ENCODE measurements at regions of chr14 and their contacts with region 1.

Region 1: GRCh38 chr14:75223664-75224154 is 47.3 kb upstream of the TMED10 start:
- DNase-seq: no peak
- ATAC-seq: peak; percentile 55
- H3K4me3 Mint-ChIP-seq: peak overlapping the region; percentile 50
- H3K27ac Mint-ChIP-seq: peak overlapping the region; percentile 36
- H3K4me1 Mint-ChIP-seq: peaks cover 43% of the 10 kb centered on the region
- H3K27me3 Mint-ChIP-seq: no peaks in the 10 kb centered on the region
- CTCF ChIP-seq: no peak

Region 2: DNA sequence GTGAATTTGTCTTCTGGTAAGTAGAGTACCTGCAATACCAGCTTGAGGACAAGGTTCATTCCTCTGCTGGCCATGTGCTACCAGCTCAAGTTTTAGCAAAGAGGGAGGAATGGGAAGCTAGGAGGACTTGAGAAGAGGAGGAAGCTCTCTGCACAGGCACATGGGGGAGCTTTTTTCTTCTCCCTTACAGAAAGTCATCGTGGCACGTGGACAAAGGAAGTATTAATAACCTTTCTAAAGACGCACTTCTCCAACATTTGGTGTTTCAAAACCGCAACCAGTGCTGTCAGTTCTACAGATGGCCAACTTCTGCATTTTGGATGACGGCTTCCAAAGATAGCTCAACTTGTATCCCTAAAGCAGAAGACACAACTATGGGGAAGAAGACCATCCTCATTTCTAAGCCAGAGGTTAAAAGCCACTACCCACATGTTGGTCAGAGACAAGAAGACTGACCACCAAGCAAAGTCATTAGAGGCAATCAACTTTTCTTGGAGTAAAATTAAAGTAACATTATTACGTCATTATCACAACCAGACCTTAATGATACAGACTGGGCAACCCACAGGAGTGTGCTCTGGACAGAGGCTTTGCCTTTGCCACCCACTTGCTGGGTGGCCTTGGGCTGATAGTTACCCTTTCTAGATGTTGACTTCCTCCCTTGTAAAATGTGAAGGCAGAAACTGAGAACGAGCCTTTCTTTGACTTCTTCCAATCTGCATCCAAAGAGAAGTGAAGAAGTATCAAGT is 35.0 kb before region 1 on chr14:
- CTCF ChIA-PET with region 1: no interaction called
- POLR2A ChIA-PET with region 1: interaction called, 11 read pairs
- intact Hi-C with region 1: no loop called
- DNase-seq: no peak
- ATAC-seq: peak; percentile 88
- H3K4me3 Mint-ChIP-seq: peak overlapping the region; percentile 47
- H3K27ac Mint-ChIP-seq: peak overlapping the region; percentile 68
- H3K4me1 Mint-ChIP-seq: peaks cover 25% of the 10 kb centered on the region
- H3K27me3 Mint-ChIP-seq: no peaks in the 10 kb centered on the region
- CTCF ChIP-seq: no peak

Region 3: DNA sequence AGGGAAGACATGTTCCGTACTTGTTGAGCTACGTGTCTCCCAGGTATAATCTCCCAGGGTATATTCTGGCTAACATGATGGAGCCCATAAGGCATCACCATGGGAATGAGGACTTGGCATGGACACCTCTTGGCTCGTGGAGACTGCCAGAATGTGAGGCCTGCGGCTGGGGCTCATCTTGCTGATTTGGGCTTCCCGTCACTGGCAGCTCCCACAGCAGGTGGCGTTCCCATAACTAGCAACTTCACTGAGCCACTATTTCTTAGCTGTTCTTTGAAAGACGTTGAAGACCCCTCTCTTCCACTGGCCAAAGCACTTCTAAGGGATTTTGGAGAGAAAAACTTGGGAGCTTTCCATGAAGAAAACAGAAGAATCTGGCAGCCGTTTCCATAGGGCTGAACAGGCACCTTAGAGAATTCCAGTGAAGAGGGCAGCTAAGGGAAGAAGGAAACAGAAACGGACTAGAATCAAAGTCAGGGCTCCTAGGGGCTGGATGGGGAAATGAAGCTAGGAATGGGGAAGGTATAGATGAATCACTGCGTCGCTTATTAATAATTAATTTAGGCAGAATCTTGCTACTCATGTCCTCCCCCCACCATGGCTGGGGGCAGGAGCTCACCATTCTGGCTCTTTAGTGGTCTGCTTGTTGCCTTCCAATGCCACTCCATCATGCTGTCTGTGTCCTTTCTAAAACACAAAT is 15.2 kb after region 1 on chr14:
- CTCF ChIA-PET with region 1: no interaction called
- POLR2A ChIA-PET with region 1: no interaction called
- intact Hi-C with region 1: no loop called
- DNase-seq: no peak
- ATAC-seq: no peak
- H3K4me3 Mint-ChIP-seq: no peak overlapping the region
- H3K27ac Mint-ChIP-seq: no peak overlapping the region
- H3K4me1 Mint-ChIP-seq: no peaks in the 10 kb centered on the region
- H3K27me3 Mint-ChIP-seq: no peaks in the 10 kb centered on the region
- CTCF ChIP-seq: no peak

Region 4: GRCh38 chr14:75267141-75267721 is 43.5 kb after region 1 on chr14:
- CTCF ChIA-PET with region 1: no interaction called
- POLR2A ChIA-PET with region 1: no interaction called
- intact Hi-C with region 1: no loop called
- DNase-seq: no peak
- ATAC-seq: no peak
- H3K4me3 Mint-ChIP-seq: no peak overlapping the region
- H3K27ac Mint-ChIP-seq: no peak overlapping the region
- H3K4me1 Mint-ChIP-seq: peaks cover 3% of the 10 kb centered on the region
- H3K27me3 Mint-ChIP-seq: peaks cover 4% of the 10 kb centered on the region
- CTCF ChIP-seq: no peak

Measured in activated B cell treated with CpG ODN at 0.5 μM for 24 hours (primary cell).